ENCODE measurements at regions of chr16 and their contacts with region 1.

Region 1: GRCh38 chr16:85554112-85554813 is 58.9 kb upstream of the GSE1 start:
- DNase-seq: peak; percentile 79
- H3K4me3 ChIP-seq: peak overlapping the region; percentile 38 to 74 (median 71)
- H3K27ac ChIP-seq: peak overlapping the region; percentile 53
- H3K4me1 ChIP-seq: peaks cover 22% of the 10 kb centered on the region
- H3K27me3 ChIP-seq: no peaks in the 10 kb centered on the region
- CTCF ChIP-seq: no peak

Region 2: GRCh38 chr16:85104821-85105391 is 449.4 kb before region 1 on chr16:
- CTCF ChIA-PET with region 1: no interaction called
- dilution Hi-C with region 1: no loop called
- in situ Hi-C with region 1: no loop called
- intact Hi-C with region 1: no loop called
- DNase-seq: no peak
- H3K4me3 ChIP-seq: no peak overlapping the region
- H3K27ac ChIP-seq: no peak overlapping the region
- H3K4me1 ChIP-seq: no peaks in the 10 kb centered on the region
- H3K27me3 ChIP-seq: no peaks in the 10 kb centered on the region
- CTCF ChIP-seq: no peak

Region 3: GRCh38 chr16:85393674-85394483 is 160.4 kb before region 1 on chr16:
- CTCF ChIA-PET with region 1: interaction called, 5 read pairs
- dilution Hi-C with region 1: no loop called
- in situ Hi-C with region 1: no loop called
- intact Hi-C with region 1: loop called (anchors 10 kb)
- DNase-seq: no peak
- H3K4me3 ChIP-seq: no peak overlapping the region
- H3K27ac ChIP-seq: no peak overlapping the region
- H3K4me1 ChIP-seq: peaks cover 54% of the 10 kb centered on the region
- H3K27me3 ChIP-seq: no peaks in the 10 kb centered on the region
- CTCF ChIP-seq: peak; percentile 31 to 49

Region 4: GRCh38 chr16:85420501-85421337 is 133.5 kb before region 1 on chr16:
- CTCF ChIA-PET with region 1: interaction called, 3 read pairs
- dilution Hi-C with region 1: no loop called
- in situ Hi-C with region 1: no loop called
- intact Hi-C with region 1: loop called (anchors 2 kb)
- DNase-seq: peak; percentile 20
- H3K4me3 ChIP-seq: no peak overlapping the region
- H3K27ac ChIP-seq: no peak overlapping the region
- H3K4me1 ChIP-seq: no peaks in the 10 kb centered on the region
- H3K27me3 ChIP-seq: no peaks in the 10 kb centered on the region
- CTCF ChIP-seq: peak; percentile 82 to 90

Region 5: GRCh38 chr16:85514595-85515318 is 39.5 kb before region 1 on chr16:
- CTCF ChIA-PET with region 1: no interaction called
- dilution Hi-C with region 1: no loop called
- in situ Hi-C with region 1: no loop called
- intact Hi-C with region 1: loop called (anchors 2 kb)
- DNase-seq: peak; percentile 85
- H3K4me3 ChIP-seq: no peak overlapping the region
- H3K27ac ChIP-seq: peak overlapping the region; percentile 56
- H3K4me1 ChIP-seq: peaks cover 21% of the 10 kb centered on the region
- H3K27me3 ChIP-seq: no peaks in the 10 kb centered on the region
- CTCF ChIP-seq: peak in 1 of 2 donors; percentile 18

Region 6: GRCh38 chr16:85524630-85525419 is 29.4 kb before region 1 on chr16:
- CTCF ChIA-PET with region 1: no interaction called
- dilution Hi-C with region 1: no loop called
- in situ Hi-C with region 1: no loop called
- intact Hi-C with region 1: loop called (anchors 2 kb)
- DNase-seq: peak; percentile 53
- H3K4me3 ChIP-seq: no peak overlapping the region
- H3K27ac ChIP-seq: peak overlapping the region; percentile 31
- H3K4me1 ChIP-seq: peaks cover 39% of the 10 kb centered on the region
- H3K27me3 ChIP-seq: no peaks in the 10 kb centered on the region
- CTCF ChIP-seq: no peak

Measured in mammary epithelial cell (primary cell).